Heart left ventricle (tissue), 16 donors: ENCODE measurements at regions of chr1 and their contacts with region 1.

Region 1: DNA sequence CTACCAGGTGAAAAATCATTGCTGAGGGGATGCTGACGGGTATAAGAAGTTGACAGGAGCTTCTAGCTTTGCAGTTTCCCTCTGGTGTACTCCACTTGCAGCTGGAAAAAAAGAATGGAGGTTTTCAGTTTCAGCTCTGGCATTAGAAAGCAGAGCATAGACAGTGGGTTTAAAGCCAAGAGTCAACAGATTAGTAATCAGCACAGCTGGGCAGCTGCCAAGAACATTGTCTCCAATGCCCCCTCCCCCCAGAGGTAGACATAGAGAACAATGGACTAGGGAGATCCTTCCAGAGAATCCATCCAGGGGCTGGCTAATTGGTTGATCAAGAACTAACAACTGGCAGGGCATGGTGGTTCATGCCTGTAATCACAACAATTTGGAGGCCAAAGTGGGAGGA is 10.1 kb upstream of the ZBTB8B start:
- DNase-seq: peak in 1 of 5 donors; percentile 41
- ATAC-seq: peak in 3 of 4 donors; percentile 26 to 53 (median 48)
- H3K4me3 ChIP-seq: no peak overlapping the region
- H3K27ac ChIP-seq: no peak overlapping the region
- H3K4me1 ChIP-seq: peaks cover 0 to 4% (median 0%) of the 10 kb centered on the region in 12 donors
- H3K27me3 ChIP-seq: peaks cover 0 to 3% (median 0%) of the 10 kb centered on the region in 9 donors
- CTCF ChIP-seq: no peak
- POLR2A ChIP-seq: no peak

Region 2: GRCh38 chr1:32612189-32612881 is 157.6 kb after region 1 on chr1:
- intact Hi-C with region 1: loop called in 2 of 10 experiments (anchors 10 kb)
- DNase-seq: peak; percentile 88 to 95 (median 94)
- ATAC-seq: peak; percentile 100
- H3K4me3 ChIP-seq: peak overlapping the region; percentile 30 to 74 (median 56)
- H3K27ac ChIP-seq: peak overlapping the region in 10 of 12 donors; percentile 54 to 83 (median 64)
- H3K4me1 ChIP-seq: peaks cover 0 to 14% (median 7%) of the 10 kb centered on the region in 12 donors
- H3K27me3 ChIP-seq: no peaks in the 10 kb centered on the region
- CTCF ChIP-seq: peak in 11 of 12 donors; percentile 20 to 56 (median 35)
- POLR2A ChIP-seq: peak in 1 of 2 donors; percentile 78